ENCODE measurements at regions of chr11 and their contacts with region 1.

Region 1: GRCh38 chr11:6459099-6459450 is 14.7 kb downstream of the TRIM3 start:
- DNase-seq: no peak
- ATAC-seq: no peak
- H3K4me3 ChIP-seq: no peak overlapping the region
- H3K4me3 Mint-ChIP-seq: no peak overlapping the region
- H3K27ac ChIP-seq: no peak overlapping the region
- H3K27ac Mint-ChIP-seq: no peak overlapping the region
- H3K4me1 ChIP-seq: no peaks in the 10 kb centered on the region
- H3K4me1 Mint-ChIP-seq: no peaks in the 10 kb centered on the region
- H3K27me3 ChIP-seq: no peaks in the 10 kb centered on the region
- H3K27me3 Mint-ChIP-seq: no peaks in the 10 kb centered on the region
- CTCF ChIP-seq: no peak

Region 2: DNA sequence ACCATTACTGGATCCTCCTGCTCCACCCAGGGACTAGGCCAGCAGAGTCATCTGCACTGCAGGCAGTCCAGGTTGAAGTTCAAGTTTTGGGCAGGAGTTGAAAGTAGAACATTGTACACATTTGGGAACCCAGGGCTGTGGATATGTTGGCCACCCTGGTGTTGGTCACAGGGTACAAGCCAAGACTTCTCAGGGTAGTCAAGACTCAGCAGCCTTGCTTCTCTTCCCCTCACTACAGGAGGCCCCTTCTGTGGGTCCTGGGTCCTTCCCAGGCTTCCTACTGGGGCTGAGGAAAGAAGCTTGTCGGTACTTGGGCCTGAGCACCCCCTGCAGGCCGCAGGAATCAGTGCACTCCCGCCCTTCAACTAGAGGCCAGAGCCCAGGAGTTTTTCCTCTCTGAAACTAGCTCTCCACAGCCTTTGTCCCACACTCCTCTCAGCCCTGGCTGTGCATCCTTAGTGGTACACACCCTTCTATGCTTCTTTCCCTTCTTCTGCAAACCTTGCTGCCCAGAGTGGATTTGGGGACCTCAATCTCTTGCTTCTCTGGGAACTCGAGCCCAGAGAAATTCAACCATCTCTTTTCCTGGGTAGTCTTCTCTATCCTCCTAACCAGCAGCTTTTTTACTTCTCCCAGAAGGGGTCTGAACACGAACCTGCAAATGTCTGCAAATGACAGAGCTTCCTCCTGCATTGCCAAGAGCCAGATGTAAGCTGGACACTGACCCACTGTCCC is 15.6 kb before region 1 on chr11:
- CTCF ChIA-PET with region 1: interaction called, 10 read pairs
- POLR2A ChIA-PET with region 1: interaction called, 4 read pairs
- intact Hi-C with region 1: no loop called
- DNase-seq: peak; percentile 37 to 82 (median 48)
- ATAC-seq: peak; percentile 91
- H3K4me3 ChIP-seq: no peak overlapping the region
- H3K4me3 Mint-ChIP-seq: no peak overlapping the region
- H3K27ac ChIP-seq: no peak overlapping the region
- H3K27ac Mint-ChIP-seq: no peak overlapping the region
- H3K4me1 ChIP-seq: peaks cover 21% of the 10 kb centered on the region
- H3K4me1 Mint-ChIP-seq: no peaks in the 10 kb centered on the region
- H3K27me3 ChIP-seq: no peaks in the 10 kb centered on the region
- H3K27me3 Mint-ChIP-seq: no peaks in the 10 kb centered on the region
- CTCF ChIP-seq: peak; percentile 89

Region 3: DNA sequence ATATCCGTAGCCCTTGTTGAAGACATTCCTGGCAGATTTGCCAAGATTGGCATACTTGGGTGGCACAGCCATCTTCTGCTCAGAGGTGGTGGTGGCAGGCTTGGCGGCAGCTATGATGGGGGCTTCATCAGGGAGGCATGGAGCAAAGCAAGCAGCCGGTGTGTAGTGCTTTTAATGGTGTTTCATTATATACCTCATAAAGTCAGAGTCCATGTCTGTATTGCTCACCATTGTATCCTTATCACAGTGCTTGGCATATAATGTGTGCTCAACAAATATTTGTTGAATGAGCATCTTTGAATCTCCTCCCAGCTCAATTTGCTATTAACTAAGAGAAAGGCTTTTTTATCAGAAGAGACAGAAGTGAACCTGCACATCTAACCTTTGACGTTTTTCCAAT is 30.2 kb after region 1 on chr11:
- CTCF ChIA-PET with region 1: no interaction called
- POLR2A ChIA-PET with region 1: no interaction called
- intact Hi-C with region 1: no loop called
- DNase-seq: no peak
- ATAC-seq: no peak
- H3K4me3 ChIP-seq: no peak overlapping the region
- H3K4me3 Mint-ChIP-seq: no peak overlapping the region
- H3K27ac ChIP-seq: no peak overlapping the region
- H3K27ac Mint-ChIP-seq: peak overlapping the region; percentile 10
- H3K4me1 ChIP-seq: no peaks in the 10 kb centered on the region
- H3K4me1 Mint-ChIP-seq: peaks cover 21% of the 10 kb centered on the region
- H3K27me3 ChIP-seq: no peaks in the 10 kb centered on the region
- H3K27me3 Mint-ChIP-seq: no peaks in the 10 kb centered on the region
- CTCF ChIP-seq: no peak